RWPE1 (cell line): ENCODE measurements at regions of chr10 and their contacts with region 1.

Region 1: GRCh38 chr10:117294039-117294645 is 53.2 kb downstream of the SLC18A2 start:
- DNase-seq: no peak
- H3K27ac ChIP-seq: no peak overlapping the region
- CTCF ChIP-seq: no peak

Region 2: GRCh38 chr10:117320050-117320665 is 26.0 kb after region 1 on chr10:
- CTCF ChIA-PET with region 1: interaction called, 11 read pairs
- POLR2A ChIA-PET with region 1: no interaction called
- DNase-seq: peak; percentile 43
- H3K27ac ChIP-seq: no peak overlapping the region
- CTCF ChIP-seq: peak; percentile 70